Endothelial cell of umbilical vein (primary cell): ENCODE measurements at regions of chr19 and their contacts with region 1.

Region 1: GRCh38 chr19:17470068-17470841 is at the start of gene SLC27A1:
- DNase-seq: peak; percentile 99
- H3K4me3 ChIP-seq: peak within 1 kb of the TSS; percentile 60 to 72 (median 61)
- H3K27ac ChIP-seq: peak within 1 kb of the TSS; percentile 16
- H3K4me1 ChIP-seq: peaks cover 11% of the 10 kb centered on the region
- H3K27me3 ChIP-seq: no peaks in the 10 kb centered on the region
- CTCF ChIP-seq: no peak
- POLR2A ChIP-seq: peak; percentile 38
- total RNA-seq, gene SLC27A1: 13.5 and 14.9 TPM in 2 replicates

Region 2: GRCh38 chr19:17260842-17261325 is 209.4 kb before region 1 on chr19:
- CTCF ChIA-PET with region 1: no interaction called
- POLR2A ChIA-PET with region 1: no interaction called
- dilution Hi-C with region 1: no loop called
- intact Hi-C with region 1: no loop called
- DNase-seq: peak; percentile 74
- H3K4me3 ChIP-seq: no peak overlapping the region
- H3K27ac ChIP-seq: no peak overlapping the region
- H3K4me1 ChIP-seq: peaks cover 13% of the 10 kb centered on the region
- H3K27me3 ChIP-seq: no peaks in the 10 kb centered on the region
- CTCF ChIP-seq: peak; percentile 93 to 97
- POLR2A ChIP-seq: no peak

Region 3: GRCh38 chr19:17346109-17346671 is 124.1 kb before region 1 on chr19:
- CTCF ChIA-PET with region 1: interaction called, 6 read pairs
- POLR2A ChIA-PET with region 1: no interaction called
- dilution Hi-C with region 1: no loop called
- intact Hi-C with region 1: loop called (anchors 1 kb)
- DNase-seq: peak; percentile 62
- H3K4me3 ChIP-seq: no peak overlapping the region
- H3K27ac ChIP-seq: no peak overlapping the region
- H3K4me1 ChIP-seq: peaks cover 25% of the 10 kb centered on the region
- H3K27me3 ChIP-seq: no peaks in the 10 kb centered on the region
- CTCF ChIP-seq: peak; percentile 86 to 96
- POLR2A ChIP-seq: no peak

Region 4: GRCh38 chr19:17419621-17420466 is 50.4 kb before region 1 on chr19 and contains the start of gene MVB12A:
- CTCF ChIA-PET with region 1: interaction called, 5 read pairs
- POLR2A ChIA-PET with region 1: no interaction called
- dilution Hi-C with region 1: no loop called
- intact Hi-C with region 1: loop called (anchors 2 kb)
- DNase-seq: peak; percentile 99
- H3K4me3 ChIP-seq: peak within 1 kb of the TSS; percentile 66 to 79 (median 68)
- H3K27ac ChIP-seq: peak within 1 kb of the TSS; percentile 64
- H3K4me1 ChIP-seq: peaks cover 14% of the 10 kb centered on the region
- H3K27me3 ChIP-seq: no peaks in the 10 kb centered on the region
- CTCF ChIP-seq: no peak
- POLR2A ChIP-seq: peak; percentile 60
- total RNA-seq, gene MVB12A: 58.1 and 63.3 TPM in 2 replicates

Region 5: GRCh38 chr19:17441241-17442021 is 28.8 kb before region 1 on chr19:
- CTCF ChIA-PET with region 1: interaction called, 23 read pairs
- POLR2A ChIA-PET with region 1: no interaction called
- dilution Hi-C with region 1: no loop called
- intact Hi-C with region 1: no loop called
- DNase-seq: peak; percentile 28
- H3K4me3 ChIP-seq: no peak overlapping the region
- H3K27ac ChIP-seq: no peak overlapping the region
- H3K4me1 ChIP-seq: no peaks in the 10 kb centered on the region
- H3K27me3 ChIP-seq: peaks cover 2 to 3% of the 10 kb centered on the region in 2 experiments
- CTCF ChIP-seq: peak; percentile 37 to 57
- POLR2A ChIP-seq: no peak

Region 6: GRCh38 chr19:17448131-17448967 is 21.9 kb before region 1 on chr19 and contains the start of gene TMEM221:
- CTCF ChIA-PET with region 1: interaction called, 11 read pairs
- POLR2A ChIA-PET with region 1: no interaction called
- dilution Hi-C with region 1: no loop called
- intact Hi-C with region 1: loop called (anchors 1 kb)
- DNase-seq: no peak
- H3K4me3 ChIP-seq: peak within 1 kb of the TSS in 1 of 3 experiments; percentile 37
- H3K27ac ChIP-seq: no peak within 1 kb of the TSS
- H3K4me1 ChIP-seq: no peaks in the 10 kb centered on the region
- H3K27me3 ChIP-seq: peaks cover 8 to 14% of the 10 kb centered on the region in 2 experiments
- CTCF ChIP-seq: peak; percentile 55 to 72
- POLR2A ChIP-seq: no peak
- total RNA-seq, gene TMEM221: not detected in 2 replicates

Region 7: GRCh38 chr19:17488593-17489391 is 18.5 kb after region 1 on chr19:
- CTCF ChIA-PET with region 1: interaction called, 3 read pairs
- POLR2A ChIA-PET with region 1: no interaction called
- dilution Hi-C with region 1: no loop called
- intact Hi-C with region 1: loop called (anchors 2 kb)
- DNase-seq: peak; percentile 82
- H3K4me3 ChIP-seq: peak overlapping the region in 2 of 3 experiments; percentile 1 to 15
- H3K27ac ChIP-seq: peak overlapping the region; percentile 32
- H3K4me1 ChIP-seq: peaks cover 17% of the 10 kb centered on the region
- H3K27me3 ChIP-seq: no peaks in the 10 kb centered on the region
- CTCF ChIP-seq: peak; percentile 7 to 46
- POLR2A ChIP-seq: no peak

Region 8: GRCh38 chr19:17496337-17496997 is 26.2 kb after region 1 on chr19:
- CTCF ChIA-PET with region 1: interaction called, 18 read pairs
- POLR2A ChIA-PET with region 1: no interaction called
- dilution Hi-C with region 1: no loop called
- intact Hi-C with region 1: no loop called
- DNase-seq: peak; percentile 81
- H3K4me3 ChIP-seq: no peak overlapping the region
- H3K27ac ChIP-seq: no peak overlapping the region
- H3K4me1 ChIP-seq: peaks cover 12% of the 10 kb centered on the region
- H3K27me3 ChIP-seq: no peaks in the 10 kb centered on the region
- CTCF ChIP-seq: peak; percentile 99
- POLR2A ChIP-seq: no peak

Region 9: GRCh38 chr19:17605761-17606745 is 135.8 kb after region 1 on chr19:
- CTCF ChIA-PET with region 1: no interaction called
- POLR2A ChIA-PET with region 1: no interaction called
- dilution Hi-C with region 1: no loop called
- intact Hi-C with region 1: no loop called
- DNase-seq: peak; percentile 77
- H3K4me3 ChIP-seq: peak overlapping the region in 1 of 3 experiments; percentile 0
- H3K27ac ChIP-seq: no peak overlapping the region
- H3K4me1 ChIP-seq: no peaks in the 10 kb centered on the region
- H3K27me3 ChIP-seq: peaks cover 2 to 3% of the 10 kb centered on the region in 2 experiments
- CTCF ChIP-seq: peak; percentile 70
- POLR2A ChIP-seq: no peak

Region 10: DNA sequence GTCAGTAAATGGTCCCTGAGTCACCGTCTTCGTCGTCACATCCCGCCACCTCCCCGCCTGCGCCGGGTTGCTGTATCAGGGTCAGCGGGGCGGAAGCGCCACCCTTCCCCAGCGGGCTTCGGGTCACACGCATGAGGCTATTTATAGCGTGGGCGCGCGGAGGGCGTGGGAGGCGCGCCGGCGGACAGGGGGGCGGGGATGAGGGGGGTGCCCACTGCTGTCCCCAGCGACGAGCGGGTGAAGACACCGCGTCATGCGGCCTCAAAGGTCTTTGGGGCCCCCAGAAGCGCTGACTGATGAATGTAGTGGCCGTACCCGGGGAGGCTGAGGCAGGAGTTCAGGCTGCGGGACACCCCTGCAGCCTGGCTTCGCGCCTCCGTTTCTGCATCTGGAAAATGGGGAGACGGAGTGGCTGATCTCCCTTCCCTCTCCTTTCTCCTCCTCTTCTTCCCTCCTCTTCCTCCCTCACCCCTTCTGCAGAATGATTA is 210.0 kb after region 1 on chr19:
- CTCF ChIA-PET with region 1: no interaction called
- POLR2A ChIA-PET with region 1: no interaction called
- dilution Hi-C with region 1: no loop called
- intact Hi-C with region 1: no loop called
- DNase-seq: peak; percentile 74
- H3K4me3 ChIP-seq: no peak overlapping the region
- H3K27ac ChIP-seq: no peak overlapping the region
- H3K4me1 ChIP-seq: peaks cover 16% of the 10 kb centered on the region
- H3K27me3 ChIP-seq: peaks cover 0 to 4% of the 10 kb centered on the region in 2 experiments
- CTCF ChIP-seq: no peak
- POLR2A ChIP-seq: no peak